ENCODE measurements at regions of chrX and their contacts with region 1.

Region 1: DNA sequence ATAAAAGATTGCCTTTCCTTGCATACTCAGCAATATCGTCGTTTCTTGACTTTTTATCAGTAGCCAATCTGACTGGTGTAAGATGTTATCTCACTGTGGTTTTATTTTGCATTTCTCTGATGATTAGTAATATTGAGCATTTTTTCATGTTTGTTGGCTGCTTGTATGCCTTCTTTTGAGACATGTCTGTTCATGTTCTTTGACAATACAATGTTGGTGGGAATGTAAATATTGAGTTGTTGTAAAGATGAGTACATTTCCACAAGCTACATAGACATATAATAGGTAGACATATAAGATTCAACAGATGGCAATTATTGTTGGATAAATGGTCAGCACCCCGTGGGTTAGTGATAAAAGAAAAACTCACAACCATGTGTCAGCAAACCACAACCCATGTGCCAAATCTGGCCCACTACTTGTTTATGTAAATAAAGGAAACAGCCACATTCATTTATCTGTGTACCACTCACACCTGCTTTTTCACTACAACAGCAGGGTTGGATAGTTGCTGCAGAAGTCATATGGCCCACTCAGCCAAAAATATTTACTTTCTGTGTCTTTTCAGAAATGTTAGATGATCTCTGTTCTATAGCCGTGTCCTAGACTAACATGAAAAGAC is 153.1 kb upstream of the VCX start:
- DNase-seq: no peak
- ATAC-seq: no peak
- H3K4me3 ChIP-seq: no peak overlapping the region
- H3K27ac ChIP-seq: no peak overlapping the region
- H3K4me1 ChIP-seq: no peaks in the 10 kb centered on the region
- H3K27me3 ChIP-seq: no peaks in the 10 kb centered on the region
- CTCF ChIP-seq: no peak
- EP300 ChIP-seq: no peak
- POLR2A ChIP-seq: no peak
- RAD21 ChIP-seq: no peak

Region 2: DNA sequence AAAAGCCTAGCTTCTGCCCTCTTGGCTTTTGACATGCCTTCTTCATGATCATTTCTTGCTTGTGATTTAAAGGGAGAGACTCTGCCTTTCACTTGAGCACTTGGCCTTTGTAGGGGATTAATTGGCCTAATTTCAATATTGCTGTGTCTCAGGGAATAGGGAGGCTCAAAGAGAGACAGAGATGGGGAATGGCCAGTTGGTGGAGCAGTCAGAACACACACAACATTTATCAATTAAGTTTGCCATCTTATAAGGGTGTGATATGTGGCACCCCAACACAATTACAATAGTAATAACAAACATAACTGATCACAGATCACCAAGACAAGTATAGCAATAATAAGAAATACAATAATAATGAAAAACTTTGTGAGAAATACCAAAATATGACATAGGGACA is 30.6 kb after region 1 on chrX:
- CTCF ChIA-PET with region 1: no interaction called
- POLR2A ChIA-PET with region 1: no interaction called
- in situ Hi-C with region 1: no loop called
- intact Hi-C with region 1: loop called (anchors 2 kb)
- DNase-seq: no peak
- ATAC-seq: no peak
- H3K4me3 ChIP-seq: no peak overlapping the region
- H3K27ac ChIP-seq: no peak overlapping the region
- H3K4me1 ChIP-seq: no peaks in the 10 kb centered on the region
- H3K27me3 ChIP-seq: no peaks in the 10 kb centered on the region
- CTCF ChIP-seq: peak; percentile 11; the same call in 1 of the 2 replicates
- EP300 ChIP-seq: no peak
- POLR2A ChIP-seq: no peak
- RAD21 ChIP-seq: no peak

Measured in HepG2 (cell line).